IMR-90 (cell line): ENCODE measurements at regions of chr1 and their contacts with region 1.

Region 1: GRCh38 chr1:36285448-36286101 is 20.6 kb upstream of the SH3D21 start:
- DNase-seq: peak; percentile 92
- ATAC-seq: peak; percentile 97
- H3K4me3 ChIP-seq: no peak overlapping the region
- H3K27ac ChIP-seq: no peak overlapping the region
- H3K4me1 ChIP-seq: peaks cover 3% of the 10 kb centered on the region
- H3K27me3 ChIP-seq: no peaks in the 10 kb centered on the region
- CTCF ChIP-seq: peak; percentile 85
- POLR2A ChIP-seq: no peak
- RAD21 ChIP-seq: peak; percentile 85

Region 2: GRCh38 chr1:36109041-36109679 is 176.4 kb before region 1 on chr1:
- CTCF ChIA-PET with region 1: no interaction called
- POLR2A ChIA-PET with region 1: no interaction called
- dilution Hi-C with region 1: no loop called
- in situ Hi-C with region 1: loop called (anchors 5 kb)
- intact Hi-C with region 1: no loop called
- DNase-seq: peak; percentile 78
- ATAC-seq: peak; percentile 79
- H3K4me3 ChIP-seq: no peak overlapping the region
- H3K27ac ChIP-seq: no peak overlapping the region
- H3K4me1 ChIP-seq: peaks cover 2% of the 10 kb centered on the region
- H3K27me3 ChIP-seq: no peaks in the 10 kb centered on the region
- CTCF ChIP-seq: no peak
- POLR2A ChIP-seq: no peak
- RAD21 ChIP-seq: no peak

Region 3: DNA sequence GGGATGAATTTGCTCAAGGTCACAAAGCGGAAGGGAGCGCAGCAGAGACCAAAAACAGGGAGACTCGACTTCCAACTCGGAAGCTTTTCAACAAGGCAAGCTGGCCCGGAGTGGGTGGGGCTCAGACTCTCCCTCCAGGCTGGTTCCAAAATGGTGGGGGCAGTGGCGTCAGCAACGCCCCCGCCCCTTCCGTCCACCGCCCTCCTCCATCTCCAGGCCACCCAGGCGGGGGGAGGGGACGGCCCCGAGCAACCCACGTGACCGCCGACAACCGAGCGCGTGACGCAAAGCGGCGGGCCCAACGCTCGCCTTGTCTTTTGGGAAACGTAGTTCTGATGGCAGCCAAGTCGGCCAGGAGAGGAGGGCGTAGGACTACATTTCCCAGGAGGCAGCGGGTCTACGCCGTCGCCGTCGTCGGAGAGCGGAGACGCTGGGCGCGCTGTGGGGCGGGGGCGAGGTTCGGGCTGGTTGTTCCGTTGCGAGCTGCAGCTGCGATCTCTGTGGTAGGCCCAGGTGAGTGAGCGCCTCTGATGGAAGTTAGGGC is 61.5 kb before region 1 on chr1 and contains the start of gene THRAP3:
- CTCF ChIA-PET with region 1: interaction called, 5 read pairs
- POLR2A ChIA-PET with region 1: interaction called, 4 read pairs
- dilution Hi-C with region 1: no loop called
- in situ Hi-C with region 1: no loop called
- intact Hi-C with region 1: loop called (anchors 2 kb)
- DNase-seq: peak; percentile 99
- ATAC-seq: peak; percentile 96
- H3K4me3 ChIP-seq: peak within 1 kb of the TSS; percentile 72
- H3K27ac ChIP-seq: peak within 1 kb of the TSS; percentile 94
- H3K4me1 ChIP-seq: peaks cover 3% of the 10 kb centered on the region
- H3K27me3 ChIP-seq: no peaks in the 10 kb centered on the region
- CTCF ChIP-seq: no peak
- POLR2A ChIP-seq: peak; percentile 95
- RAD21 ChIP-seq: 0 out of 2 replicates have a peak, but pooled peaks have one; percentile 17
- total RNA-seq, gene THRAP3: 66.5 and 73.9 TPM in 2 replicates